HCT116 (cell line): ENCODE measurements at regions of chr10 and their contacts with region 1.

Region 1: DNA sequence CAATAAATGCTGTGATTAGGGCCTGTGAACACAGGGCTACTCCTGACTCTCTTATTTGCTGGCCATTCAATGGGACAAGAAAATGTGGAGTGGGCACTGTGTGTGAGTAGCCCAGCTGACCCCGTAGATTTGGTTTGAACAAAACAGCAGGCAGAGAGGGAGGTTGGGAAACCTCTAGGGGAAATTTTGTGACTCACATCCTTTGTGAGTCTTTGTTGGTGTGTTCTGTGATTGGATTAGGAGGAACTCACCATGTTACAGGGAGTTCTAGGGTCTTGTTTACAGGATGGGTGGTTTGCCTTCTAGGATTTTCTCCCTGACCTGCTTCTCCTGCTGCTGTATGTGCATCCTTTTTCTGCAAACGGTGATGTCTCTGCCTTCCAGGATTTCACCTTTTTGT is 128.3 kb upstream of the MKI67 start:
- DNase-seq: no peak
- ATAC-seq: no peak
- H3K4me3 ChIP-seq: no peak overlapping the region
- H3K27ac ChIP-seq: no peak overlapping the region
- H3K4me1 ChIP-seq: no peaks in the 10 kb centered on the region
- H3K27me3 ChIP-seq: peaks cover 88% of the 10 kb centered on the region
- CTCF ChIP-seq: no peak
- POLR2A ChIP-seq: no peak
- RAD21 ChIP-seq: no peak

Region 2: DNA sequence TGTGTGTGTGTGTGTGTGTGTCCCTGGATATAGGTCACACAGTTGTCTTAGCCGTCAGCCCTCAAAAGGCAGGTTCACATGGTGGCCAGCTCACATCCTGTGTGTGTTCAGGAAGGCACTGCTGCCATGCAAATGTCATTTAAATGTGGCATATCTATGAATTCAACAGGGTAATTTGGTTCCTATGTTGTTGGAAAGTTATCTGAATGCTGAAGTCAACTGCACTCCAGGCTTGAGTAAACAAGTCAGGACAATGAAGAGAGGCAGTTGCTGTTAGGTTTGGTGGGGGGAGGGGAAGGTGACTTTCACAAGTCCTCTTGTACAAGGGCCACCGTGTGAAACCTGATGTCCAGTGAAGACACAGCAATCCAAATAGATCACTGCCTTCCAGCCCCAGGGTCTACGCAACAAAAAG is 286.4 kb before region 1 on chr10:
- CTCF ChIA-PET with region 1: no interaction called
- POLR2A ChIA-PET with region 1: no interaction called
- RAD21 ChIA-PET with region 1: no interaction called
- intact Hi-C with region 1: no loop called
- DNase-seq: no peak
- ATAC-seq: no peak
- H3K4me3 ChIP-seq: no peak overlapping the region
- H3K27ac ChIP-seq: no peak overlapping the region
- H3K4me1 ChIP-seq: no peaks in the 10 kb centered on the region
- H3K27me3 ChIP-seq: no peaks in the 10 kb centered on the region
- CTCF ChIP-seq: no peak
- POLR2A ChIP-seq: no peak
- RAD21 ChIP-seq: no peak

Region 3: DNA sequence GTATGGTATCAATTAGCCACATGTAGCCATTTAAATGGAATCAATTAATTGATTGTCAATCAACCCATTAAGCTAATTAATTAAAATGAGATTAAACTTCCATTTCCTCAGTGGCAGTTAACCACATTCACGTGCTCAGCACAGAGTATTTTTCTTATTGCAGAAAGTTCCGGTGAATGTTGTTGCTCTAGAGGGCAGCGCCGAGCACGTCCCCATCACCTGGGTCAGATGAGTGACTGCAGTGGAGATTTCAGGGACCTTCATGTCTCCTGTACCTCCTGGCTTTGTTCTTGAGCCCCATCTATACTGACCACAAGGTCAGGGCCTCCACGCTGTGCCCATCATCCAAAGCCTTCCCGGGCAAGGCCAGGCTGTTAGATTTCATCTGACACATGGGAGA is 40.5 kb after region 1 on chr10:
- CTCF ChIA-PET with region 1: no interaction called
- POLR2A ChIA-PET with region 1: no interaction called
- RAD21 ChIA-PET with region 1: no interaction called
- intact Hi-C with region 1: loop called (anchors 1 kb)
- DNase-seq: no peak
- ATAC-seq: peak; percentile 59; the same call in 1 of the 2 replicates
- H3K4me3 ChIP-seq: no peak overlapping the region
- H3K27ac ChIP-seq: no peak overlapping the region
- H3K4me1 ChIP-seq: no peaks in the 10 kb centered on the region
- H3K27me3 ChIP-seq: peaks cover 42% of the 10 kb centered on the region
- CTCF ChIP-seq: peak in 2 of 3 experiments; percentile 39; a peak in 2 of 6 replicates
- POLR2A ChIP-seq: no peak
- RAD21 ChIP-seq: no peak